Heart right ventricle (tissue), 16 donors: ENCODE measurements at regions of chr20 and their contacts with region 1.

Region 1: GRCh38 chr20:10673988-10674711 is at the start of gene JAG1:
- DNase-seq: peak; percentile 95 to 96
- ATAC-seq: peak; percentile 85 to 93 (median 88)
- H3K4me3 ChIP-seq: peak within 1 kb of the TSS; percentile 69 to 98 (median 87)
- H3K27ac ChIP-seq: peak within 1 kb of the TSS; percentile 89 to 100 (median 98)
- H3K4me1 ChIP-seq: peaks cover 1 to 33% (median 18%) of the 10 kb centered on the region in 9 donors
- H3K27me3 ChIP-seq: no peaks in the 10 kb centered on the region
- CTCF ChIP-seq: no peak
- total RNA-seq, gene JAG1: 23.0 to 38.2 (median 27.5) TPM

Region 2: DNA sequence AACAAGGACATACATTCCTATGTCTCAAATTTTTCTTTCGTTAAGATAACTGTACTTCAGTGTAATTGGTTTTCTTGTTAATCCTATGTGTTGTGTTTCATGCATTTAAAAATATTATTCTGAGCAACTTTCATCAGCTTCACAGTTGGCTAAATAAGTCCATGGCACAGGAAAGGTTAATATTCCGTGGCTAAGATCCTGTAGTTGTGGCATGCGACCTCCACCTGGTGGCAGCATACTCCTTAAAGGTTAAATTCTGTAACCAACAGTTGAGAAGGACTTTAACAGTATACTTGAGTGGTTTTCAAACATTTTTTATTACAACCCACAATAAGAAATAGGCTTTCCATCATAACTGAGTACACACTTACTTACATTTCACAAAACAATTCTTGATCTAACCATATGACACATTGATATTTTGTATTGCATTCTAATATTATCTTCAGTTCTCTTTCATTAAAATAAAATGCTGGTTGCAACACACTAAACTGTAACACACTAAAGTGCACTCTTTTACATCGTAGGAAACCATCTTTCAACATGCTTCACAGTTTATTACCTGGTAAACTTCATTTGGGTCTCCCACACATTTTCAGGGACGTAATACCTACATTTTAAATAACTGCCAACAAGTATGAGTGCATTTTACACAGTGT is 120.7 kb before region 1 on chr20:
- intact Hi-C with region 1: loop called in 8 of 10 experiments (anchors 5 to 10 kb)
- DNase-seq: peak; percentile 55 to 77
- ATAC-seq: peak in 7 of 8 donors; percentile 45 to 79 (median 73)
- H3K4me3 ChIP-seq: no peak overlapping the region
- H3K27ac ChIP-seq: no peak overlapping the region
- H3K4me1 ChIP-seq: peaks cover 0 to 38% (median 14%) of the 10 kb centered on the region in 9 donors
- H3K27me3 ChIP-seq: no peaks in the 10 kb centered on the region
- CTCF ChIP-seq: peak; percentile 65 to 90 (median 82)

Region 3: GRCh38 chr20:10730629-10731183 is 56.6 kb after region 1 on chr20:
- intact Hi-C with region 1: no loop called
- DNase-seq: no peak
- ATAC-seq: no peak
- H3K4me3 ChIP-seq: no peak overlapping the region
- H3K27ac ChIP-seq: no peak overlapping the region
- H3K4me1 ChIP-seq: peaks cover 0 to 13% (median 0%) of the 10 kb centered on the region in 9 donors
- H3K27me3 ChIP-seq: no peaks in the 10 kb centered on the region
- CTCF ChIP-seq: no peak

Region 4: DNA sequence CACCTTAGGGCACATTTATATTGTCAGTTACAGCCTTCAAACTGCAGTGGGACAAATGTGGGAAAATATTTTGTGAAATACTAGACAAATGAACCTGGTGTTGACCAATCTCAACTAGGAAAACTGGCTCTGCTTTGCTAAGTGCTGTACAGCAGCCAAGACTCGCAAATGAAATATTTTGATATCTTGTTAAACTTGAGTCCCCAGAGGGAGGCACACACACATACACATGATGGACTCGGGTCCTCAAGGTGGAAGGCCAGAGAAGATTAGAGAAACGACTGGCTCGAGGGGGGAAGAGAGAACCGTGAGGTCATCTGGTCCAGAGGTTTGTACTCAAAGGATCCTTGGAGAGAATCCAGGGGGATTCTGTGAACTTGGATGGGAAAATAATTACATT is 66.9 kb after region 1 on chr20:
- intact Hi-C with region 1: loop called in 3 of 10 experiments (anchors 2 to 5 kb)
- DNase-seq: no peak
- ATAC-seq: peak in 4 of 8 donors; percentile 24 to 58 (median 33)
- H3K4me3 ChIP-seq: no peak overlapping the region
- H3K27ac ChIP-seq: peak overlapping the region in 5 of 10 donors; percentile 15 to 62 (median 38)
- H3K4me1 ChIP-seq: peaks cover 0 to 42% (median 13%) of the 10 kb centered on the region in 9 donors
- H3K27me3 ChIP-seq: no peaks in the 10 kb centered on the region
- CTCF ChIP-seq: no peak

Region 5: GRCh38 chr20:10802236-10802635 is 128.1 kb after region 1 on chr20:
- intact Hi-C with region 1: loop called in 1 of 10 experiments (anchors 10 kb)
- DNase-seq: no peak
- ATAC-seq: no peak
- H3K4me3 ChIP-seq: no peak overlapping the region
- H3K27ac ChIP-seq: no peak overlapping the region
- H3K4me1 ChIP-seq: peaks cover 0 to 27% (median 18%) of the 10 kb centered on the region in 9 donors
- H3K27me3 ChIP-seq: no peaks in the 10 kb centered on the region
- CTCF ChIP-seq: no peak

Region 6: GRCh38 chr20:10961651-10962288 is 287.6 kb after region 1 on chr20:
- intact Hi-C with region 1: loop called in 2 of 10 experiments (anchors 10 kb)
- DNase-seq: no peak
- ATAC-seq: no peak
- H3K4me3 ChIP-seq: no peak overlapping the region
- H3K27ac ChIP-seq: no peak overlapping the region
- H3K4me1 ChIP-seq: peaks cover 0 to 50% (median 14%) of the 10 kb centered on the region in 9 donors
- H3K27me3 ChIP-seq: no peaks in the 10 kb centered on the region
- CTCF ChIP-seq: no peak

Region 7: DNA sequence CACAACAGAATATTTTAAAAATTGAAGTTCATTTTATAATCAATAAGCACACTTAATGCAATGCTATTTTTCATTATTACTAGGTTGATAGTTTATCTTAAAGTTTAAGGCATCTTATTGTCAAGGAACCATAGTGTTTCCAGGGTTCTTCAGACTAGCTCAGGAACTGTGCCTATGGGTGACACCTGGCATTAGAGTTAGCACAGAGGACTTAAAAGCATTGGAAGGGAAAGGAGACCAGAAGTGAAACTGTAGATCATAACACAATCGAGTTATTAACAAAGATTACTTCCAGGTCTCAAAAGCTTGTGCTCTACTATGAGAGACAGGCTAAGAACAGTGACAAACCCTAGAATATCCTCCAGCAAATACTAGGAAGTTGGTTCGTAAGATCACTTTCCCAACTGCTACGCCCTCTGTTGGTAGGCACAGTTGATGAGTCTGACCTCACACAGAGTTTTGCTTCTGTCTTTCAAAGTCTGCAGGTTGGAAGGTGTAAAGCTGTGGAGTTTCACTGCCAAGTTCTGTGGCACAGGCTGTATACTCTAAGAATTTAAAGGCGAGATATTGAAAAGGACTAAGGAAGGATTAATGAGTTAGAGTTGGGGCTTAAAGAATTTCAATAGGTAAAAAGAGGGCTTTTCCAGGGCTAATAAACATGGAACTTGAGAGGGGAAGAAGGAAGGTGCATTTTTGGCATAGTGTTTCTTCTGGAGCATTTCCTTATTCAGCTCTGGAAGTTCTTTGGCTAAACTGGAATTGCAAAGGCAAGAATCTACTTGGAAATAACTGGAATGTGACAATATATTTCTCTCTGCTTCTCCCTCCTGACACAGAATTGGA is 531.0 kb after region 1 on chr20:
- intact Hi-C with region 1: loop called in 9 of 10 experiments (anchors 1 to 10 kb)
- DNase-seq: peak; percentile 19 to 79
- ATAC-seq: peak; percentile 91 to 98 (median 95)
- H3K4me3 ChIP-seq: no peak overlapping the region
- H3K27ac ChIP-seq: peak overlapping the region in 5 of 10 donors; percentile 2 to 61 (median 33)
- H3K4me1 ChIP-seq: peaks cover 0 to 15% (median 7%) of the 10 kb centered on the region in 9 donors
- H3K27me3 ChIP-seq: no peaks in the 10 kb centered on the region
- CTCF ChIP-seq: peak; percentile 65 to 91 (median 85)

Region 8: DNA sequence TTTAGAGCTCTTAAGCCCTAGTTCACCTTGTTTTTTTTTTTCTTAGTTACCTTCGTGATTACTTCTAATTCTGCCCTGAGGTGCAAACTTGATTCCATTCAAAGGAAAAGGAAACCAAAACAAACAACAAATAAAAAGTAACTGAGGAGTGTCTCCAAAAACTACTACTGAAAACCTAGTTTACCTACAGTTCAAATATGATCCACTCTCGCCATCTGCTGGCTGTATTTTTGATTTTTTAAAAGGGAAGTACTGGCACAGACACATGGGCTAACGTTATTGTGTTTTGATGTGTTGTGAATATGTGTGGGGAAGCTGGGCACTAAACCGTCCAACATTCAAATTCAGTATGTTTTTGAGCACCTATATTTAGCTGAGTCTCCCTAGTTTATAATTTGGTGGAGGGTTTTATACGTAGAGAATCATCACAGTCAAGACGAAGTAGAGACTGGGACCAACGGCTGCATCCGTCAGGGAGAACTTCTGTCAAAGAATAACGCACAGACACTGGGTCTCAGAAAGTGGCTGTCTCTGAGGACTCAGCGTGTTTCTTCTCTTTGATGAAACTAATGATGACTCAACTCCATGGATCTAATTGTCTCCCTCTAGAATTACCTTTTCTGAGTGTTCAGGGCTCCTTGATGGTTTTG is 870.0 kb after region 1 on chr20:
- intact Hi-C with region 1: loop called in 1 of 10 experiments (anchors 10 kb)
- DNase-seq: peak in 1 of 2 donors; percentile 62
- ATAC-seq: peak in 5 of 8 donors; percentile 48 to 75 (median 74)
- H3K4me3 ChIP-seq: peak overlapping the region in 2 of 10 donors; percentile 5 to 10
- H3K27ac ChIP-seq: no peak overlapping the region
- H3K4me1 ChIP-seq: peaks cover 0 to 12% (median 0%) of the 10 kb centered on the region in 9 donors
- H3K27me3 ChIP-seq: peaks cover 0 to 3% (median 0%) of the 10 kb centered on the region in 7 donors
- CTCF ChIP-seq: peak in 8 of 9 donors; percentile 21 to 79 (median 66)